Colonic mucosa (tissue), 4 donors: ENCODE measurements at regions of chr3 and their contacts with region 1.

Region 1: GRCh38 chr3:3200632-3201212 is 21.2 kb upstream of the CRBN start:
- DNase-seq: peak; percentile 38
- H3K4me3 ChIP-seq: no peak overlapping the region
- H3K27ac ChIP-seq: no peak overlapping the region
- H3K4me1 ChIP-seq: no peaks in the 10 kb centered on the region
- H3K27me3 ChIP-seq: no peaks in the 10 kb centered on the region
- CTCF ChIP-seq: peak; percentile 74

Region 2: GRCh38 chr3:4001976-4002375 is 801.3 kb after region 1 on chr3:
- intact Hi-C with region 1: loop called (anchors 5 kb)
- DNase-seq: no peak
- H3K4me3 ChIP-seq: no peak overlapping the region
- H3K27ac ChIP-seq: no peak overlapping the region
- H3K4me1 ChIP-seq: no peaks in the 10 kb centered on the region
- H3K27me3 ChIP-seq: no peaks in the 10 kb centered on the region
- CTCF ChIP-seq: no peak

Region 3: GRCh38 chr3:4271834-4272233 is 1071.1 kb after region 1 on chr3:
- intact Hi-C with region 1: loop called (anchors 5 kb)
- DNase-seq: no peak
- H3K4me3 ChIP-seq: no peak overlapping the region
- H3K27ac ChIP-seq: no peak overlapping the region
- H3K4me1 ChIP-seq: no peaks in the 10 kb centered on the region
- H3K27me3 ChIP-seq: no peaks in the 10 kb centered on the region
- CTCF ChIP-seq: peak; percentile 31

Region 4: GRCh38 chr3:4284865-4285264 is 1084.1 kb after region 1 on chr3:
- intact Hi-C with region 1: loop called (anchors 5 kb)
- DNase-seq: no peak
- H3K4me3 ChIP-seq: no peak overlapping the region
- H3K27ac ChIP-seq: no peak overlapping the region
- H3K4me1 ChIP-seq: no peaks in the 10 kb centered on the region
- H3K27me3 ChIP-seq: no peaks in the 10 kb centered on the region
- CTCF ChIP-seq: no peak